Left ventricle myocardium inferior (tissue), 1 donor: ENCODE measurements at regions of chr9 and their contacts with region 1.

Region 1: GRCh38 chr9:34332076-34332964 is 3.0 kb downstream of the NUDT2 start:
- DNase-seq: no peak
- H3K4me3 ChIP-seq: no peak overlapping the region
- H3K27ac ChIP-seq: peak overlapping the region; percentile 27
- H3K4me1 ChIP-seq: peaks cover 48% of the 10 kb centered on the region
- H3K27me3 ChIP-seq: no peaks in the 10 kb centered on the region
- CTCF ChIP-seq: peak; percentile 73

Region 2: GRCh38 chr9:33988219-33988890 is 344.0 kb before region 1 on chr9:
- intact Hi-C with region 1: no loop called
- DNase-seq: no peak
- H3K4me3 ChIP-seq: no peak overlapping the region
- H3K27ac ChIP-seq: no peak overlapping the region
- H3K4me1 ChIP-seq: peaks cover 3% of the 10 kb centered on the region
- H3K27me3 ChIP-seq: no peaks in the 10 kb centered on the region
- CTCF ChIP-seq: no peak

Region 3: DNA sequence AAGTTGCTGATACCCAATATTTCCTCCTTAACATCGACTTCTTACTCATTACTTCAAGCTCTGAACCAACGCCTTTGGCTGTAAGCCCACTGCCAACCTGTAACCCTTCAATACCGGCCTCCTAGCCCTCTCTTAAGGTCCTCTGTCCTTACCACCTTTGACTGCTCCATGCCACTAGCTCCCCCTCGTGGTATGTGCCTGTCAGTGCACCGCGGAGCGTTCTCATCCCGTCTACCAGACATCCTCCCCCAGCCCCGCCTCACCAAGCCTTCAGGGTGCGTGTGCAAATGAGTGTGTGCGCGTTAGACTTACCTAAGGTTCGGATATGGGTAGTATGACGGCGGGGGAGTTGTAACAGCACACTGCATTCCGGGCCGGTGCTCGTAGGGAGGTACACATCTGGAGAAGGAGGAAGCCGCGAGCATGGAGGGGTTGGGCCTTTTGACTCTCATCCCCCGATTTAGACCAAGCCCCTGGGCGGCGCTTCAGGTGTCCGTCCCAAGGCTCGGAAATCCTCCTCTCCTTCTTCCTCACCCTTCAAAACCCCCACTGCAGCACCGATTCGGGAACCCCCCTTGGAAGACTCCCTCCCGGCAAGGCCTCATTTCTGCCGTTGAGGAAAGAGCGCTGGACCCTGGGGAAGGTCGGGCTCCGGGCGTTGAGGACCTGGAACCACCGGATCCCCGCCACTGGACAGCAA is 47.2 kb after region 1 on chr9:
- intact Hi-C with region 1: loop called (anchors 2 kb)
- DNase-seq: peak; percentile 84
- H3K4me3 ChIP-seq: peak overlapping the region; percentile 81
- H3K27ac ChIP-seq: peak overlapping the region; percentile 88
- H3K4me1 ChIP-seq: peaks cover 59% of the 10 kb centered on the region
- H3K27me3 ChIP-seq: no peaks in the 10 kb centered on the region
- CTCF ChIP-seq: peak; percentile 99